ENCODE measurements at regions of chrX and their contacts with region 1.

Region 1: GRCh38 chrX:150587585-150588503 is 19.4 kb downstream of the MTM1 start:
- DNase-seq: peak; percentile 18 to 69 (median 38)
- ATAC-seq: peak; percentile 51
- H3K4me3 ChIP-seq: no peak overlapping the region
- H3K4me3 Mint-ChIP-seq: no peak overlapping the region
- H3K27ac ChIP-seq: no peak overlapping the region
- H3K27ac Mint-ChIP-seq: no peak overlapping the region
- H3K4me1 ChIP-seq: no peaks in the 10 kb centered on the region
- H3K4me1 Mint-ChIP-seq: peaks cover 39% of the 10 kb centered on the region
- H3K27me3 ChIP-seq: no peaks in the 10 kb centered on the region
- H3K27me3 Mint-ChIP-seq: no peaks in the 10 kb centered on the region
- CTCF ChIP-seq: peak; percentile 77

Region 2: DNA sequence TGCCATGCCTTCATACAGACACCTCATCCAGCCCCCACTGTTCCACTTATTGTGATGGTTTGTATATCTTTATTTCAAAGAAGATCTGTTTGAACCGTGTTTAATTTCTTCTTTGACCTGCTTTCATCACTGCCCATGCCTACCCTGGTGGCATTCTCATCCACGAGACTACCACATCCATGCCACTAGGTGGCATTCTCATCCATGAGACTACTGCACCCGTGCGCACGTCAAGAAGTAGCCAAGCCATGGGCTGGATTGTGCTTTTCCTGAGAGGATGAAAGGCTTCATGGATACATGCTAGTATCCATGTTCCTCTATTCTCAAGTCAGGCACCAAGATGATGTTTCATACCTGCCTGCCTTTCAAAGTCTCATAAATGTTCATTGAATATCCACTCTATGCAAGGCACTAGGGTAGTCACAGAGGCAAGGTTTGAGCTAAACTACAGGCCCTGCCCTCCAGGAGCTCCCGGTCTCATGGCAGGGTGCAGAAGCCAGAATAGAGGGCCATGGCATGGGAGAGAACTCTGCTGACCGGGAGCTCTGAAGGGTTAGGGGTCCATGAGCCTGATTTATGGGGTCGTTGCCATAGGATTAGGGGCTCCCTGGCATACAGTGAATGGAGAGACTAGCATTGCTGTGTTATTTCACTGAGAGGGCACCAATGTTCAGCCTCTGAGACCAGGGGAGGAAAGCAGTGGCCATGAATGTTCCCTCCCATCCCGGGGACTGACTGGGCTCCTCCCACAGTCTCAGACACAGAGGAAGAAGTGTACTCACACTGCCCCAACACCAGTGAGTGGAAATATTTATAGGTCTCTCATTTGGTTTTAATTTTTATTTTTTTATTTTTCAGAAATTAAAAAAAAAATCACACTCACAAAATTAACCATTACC is 624.7 kb before region 1 on chrX:
- CTCF ChIA-PET with region 1: no interaction called
- POLR2A ChIA-PET with region 1: no interaction called
- intact Hi-C with region 1: loop called in 1 of 2 experiments (anchors 5 kb)
- DNase-seq: peak in 4 of 14 experiments; percentile 2 to 41 (median 38)
- ATAC-seq: peak; percentile 43
- H3K4me3 ChIP-seq: no peak overlapping the region
- H3K4me3 Mint-ChIP-seq: no peak overlapping the region
- H3K27ac ChIP-seq: no peak overlapping the region
- H3K27ac Mint-ChIP-seq: no peak overlapping the region
- H3K4me1 ChIP-seq: no peaks in the 10 kb centered on the region
- H3K4me1 Mint-ChIP-seq: no peaks in the 10 kb centered on the region
- H3K27me3 ChIP-seq: no peaks in the 10 kb centered on the region
- H3K27me3 Mint-ChIP-seq: no peaks in the 10 kb centered on the region
- CTCF ChIP-seq: no peak

Region 3: DNA sequence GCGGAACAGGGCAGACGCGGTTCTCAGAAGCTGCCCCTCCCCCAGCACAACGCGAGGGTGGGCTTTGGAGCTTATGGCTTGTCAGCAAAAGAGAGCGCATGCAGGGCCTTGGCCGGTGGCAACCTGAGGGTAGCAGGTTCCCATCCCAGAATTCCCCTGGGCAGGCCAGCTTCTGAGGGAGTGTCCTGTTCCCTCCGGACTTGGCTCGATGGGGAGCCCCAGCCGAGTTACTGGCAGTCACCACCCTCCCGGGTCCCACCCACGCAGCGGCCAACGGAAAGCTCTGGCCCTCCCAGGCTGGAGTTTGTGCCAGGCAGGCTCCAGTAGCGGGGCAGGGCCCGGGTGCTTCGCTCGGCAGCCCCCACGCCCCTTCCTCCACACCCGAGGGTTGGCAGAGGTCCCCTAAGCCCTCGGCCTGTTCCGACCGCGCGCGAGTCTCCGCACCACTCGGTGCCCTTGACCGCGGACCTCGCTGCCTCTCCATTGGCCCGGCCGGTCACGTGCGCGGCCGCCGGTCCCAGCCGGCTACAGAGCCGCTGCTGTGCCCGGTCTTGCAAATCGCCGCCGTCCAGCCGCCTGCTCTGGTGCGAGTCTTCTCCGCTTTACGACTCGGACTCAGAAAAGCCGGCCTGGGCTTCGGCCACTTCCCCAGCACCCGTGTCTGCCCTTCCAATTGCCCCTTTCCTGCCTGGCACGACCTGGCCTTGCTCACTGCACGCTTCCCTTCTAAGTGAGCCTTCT is 40.3 kb before region 1 on chrX:
- CTCF ChIA-PET with region 1: no interaction called
- POLR2A ChIA-PET with region 1: interaction called, 3 read pairs
- intact Hi-C with region 1: loop called (anchors 1 to 5 kb)
- DNase-seq: peak in 2 of 14 experiments; percentile 38
- ATAC-seq: no peak
- H3K4me3 ChIP-seq: peak overlapping the region; percentile 50
- H3K4me3 Mint-ChIP-seq: peak overlapping the region; percentile 83
- H3K27ac ChIP-seq: peak overlapping the region in 1 of 2 donors; percentile 13
- H3K27ac Mint-ChIP-seq: peak overlapping the region; percentile 84
- H3K4me1 ChIP-seq: peaks cover 40% of the 10 kb centered on the region
- H3K4me1 Mint-ChIP-seq: peaks cover 34% of the 10 kb centered on the region
- H3K27me3 ChIP-seq: no peaks in the 10 kb centered on the region
- H3K27me3 Mint-ChIP-seq: no peaks in the 10 kb centered on the region
- CTCF ChIP-seq: no peak

Region 4: GRCh38 chrX:150599226-150599625 is 11.4 kb after region 1 on chrX:
- CTCF ChIA-PET with region 1: no interaction called
- POLR2A ChIA-PET with region 1: no interaction called
- intact Hi-C with region 1: no loop called
- DNase-seq: no peak
- ATAC-seq: no peak
- H3K4me3 ChIP-seq: no peak overlapping the region
- H3K4me3 Mint-ChIP-seq: no peak overlapping the region
- H3K27ac ChIP-seq: no peak overlapping the region
- H3K27ac Mint-ChIP-seq: no peak overlapping the region
- H3K4me1 ChIP-seq: no peaks in the 10 kb centered on the region
- H3K4me1 Mint-ChIP-seq: peaks cover 6% of the 10 kb centered on the region
- H3K27me3 ChIP-seq: no peaks in the 10 kb centered on the region
- H3K27me3 Mint-ChIP-seq: no peaks in the 10 kb centered on the region
- CTCF ChIP-seq: no peak